ENCODE measurements at regions of chr5 and their contacts with region 1.

Region 1: DNA sequence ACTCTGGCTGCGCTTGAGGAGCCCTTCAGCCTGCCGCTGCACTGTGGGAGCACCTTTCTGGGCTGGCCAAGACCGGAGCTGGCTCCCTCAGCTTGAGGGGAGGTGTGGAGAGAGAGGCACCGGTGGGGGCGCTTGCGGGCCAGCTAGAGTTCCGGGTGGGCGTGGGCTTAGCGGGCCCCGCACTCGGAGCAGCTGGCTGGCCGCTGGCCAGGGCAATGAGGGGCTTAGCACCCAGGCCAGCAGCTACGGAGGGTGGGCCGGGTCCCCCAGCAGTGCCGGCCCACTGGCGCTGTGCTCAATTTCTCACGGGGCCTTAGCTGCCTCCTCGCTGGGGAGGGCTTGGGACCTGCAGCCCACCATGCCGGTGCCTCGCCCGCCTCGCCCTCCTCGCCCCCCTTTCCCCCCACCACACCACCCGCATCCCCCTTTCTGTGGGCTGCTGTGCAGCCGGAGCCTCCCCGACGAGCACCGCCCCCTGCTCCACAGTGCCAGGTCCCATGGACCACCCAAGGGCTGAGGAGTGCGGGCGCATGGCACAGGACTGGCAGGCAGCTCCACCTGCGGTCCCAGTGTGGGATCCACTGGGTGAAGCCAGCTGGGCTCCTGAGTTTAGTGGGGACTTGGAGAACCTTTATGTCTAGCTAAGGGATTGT is 954.5 kb downstream of the DTWD2 start:
- DNase-seq: no peak
- ATAC-seq: no peak
- H3K4me3 ChIP-seq: no peak overlapping the region
- H3K4me3 Mint-ChIP-seq: no peak overlapping the region
- H3K27ac ChIP-seq: no peak overlapping the region
- H3K27ac Mint-ChIP-seq: no peak overlapping the region
- H3K4me1 ChIP-seq: no peaks in the 10 kb centered on the region
- H3K4me1 Mint-ChIP-seq: no peaks in the 10 kb centered on the region
- H3K27me3 ChIP-seq: no peaks in the 10 kb centered on the region
- H3K27me3 Mint-ChIP-seq: no peaks in the 10 kb centered on the region

Region 2: GRCh38 chr5:117731446-117731845 is 302.4 kb before region 1 on chr5:
- CTCF ChIA-PET with region 1: no interaction called
- POLR2A ChIA-PET with region 1: no interaction called
- DNase-seq: no peak
- ATAC-seq: no peak
- H3K4me3 ChIP-seq: no peak overlapping the region
- H3K4me3 Mint-ChIP-seq: no peak overlapping the region
- H3K27ac ChIP-seq: no peak overlapping the region
- H3K27ac Mint-ChIP-seq: no peak overlapping the region
- H3K4me1 ChIP-seq: no peaks in the 10 kb centered on the region
- H3K4me1 Mint-ChIP-seq: no peaks in the 10 kb centered on the region
- H3K27me3 ChIP-seq: no peaks in the 10 kb centered on the region
- H3K27me3 Mint-ChIP-seq: no peaks in the 10 kb centered on the region

Region 3: DNA sequence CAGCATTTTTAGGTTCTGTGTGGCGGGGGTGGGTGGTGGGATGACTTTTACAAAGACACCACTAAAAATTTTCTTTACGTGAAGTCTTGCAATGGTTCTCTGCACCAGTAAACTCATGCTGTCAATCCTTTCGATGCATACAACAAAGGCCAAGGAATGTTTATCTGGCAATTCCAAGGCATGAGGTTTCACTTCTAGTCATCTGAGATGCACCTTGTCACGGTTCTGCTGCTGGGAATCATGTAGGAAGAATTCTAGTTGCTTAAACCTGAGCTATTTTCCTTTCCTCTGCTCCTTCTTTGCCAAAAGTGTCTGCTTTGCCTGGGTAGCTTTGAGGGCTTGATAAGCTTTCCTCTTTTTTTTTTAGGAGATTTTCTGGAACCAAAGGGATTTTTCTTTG is 254.6 kb before region 1 on chr5:
- CTCF ChIA-PET with region 1: no interaction called
- POLR2A ChIA-PET with region 1: interaction called in 1 of 2 experiments, 10 read pairs
- DNase-seq: no peak
- ATAC-seq: no peak
- H3K4me3 ChIP-seq: no peak overlapping the region
- H3K4me3 Mint-ChIP-seq: no peak overlapping the region
- H3K27ac ChIP-seq: no peak overlapping the region
- H3K27ac Mint-ChIP-seq: no peak overlapping the region
- H3K4me1 ChIP-seq: no peaks in the 10 kb centered on the region
- H3K4me1 Mint-ChIP-seq: no peaks in the 10 kb centered on the region
- H3K27me3 ChIP-seq: no peaks in the 10 kb centered on the region
- H3K27me3 Mint-ChIP-seq: no peaks in the 10 kb centered on the region

Region 4: GRCh38 chr5:118139460-118139859 is 105.6 kb after region 1 on chr5:
- CTCF ChIA-PET with region 1: no interaction called
- POLR2A ChIA-PET with region 1: no interaction called
- DNase-seq: no peak
- ATAC-seq: no peak
- H3K4me3 ChIP-seq: no peak overlapping the region
- H3K4me3 Mint-ChIP-seq: no peak overlapping the region
- H3K27ac ChIP-seq: no peak overlapping the region
- H3K27ac Mint-ChIP-seq: no peak overlapping the region
- H3K4me1 ChIP-seq: no peaks in the 10 kb centered on the region
- H3K4me1 Mint-ChIP-seq: no peaks in the 10 kb centered on the region
- H3K27me3 ChIP-seq: no peaks in the 10 kb centered on the region
- H3K27me3 Mint-ChIP-seq: no peaks in the 10 kb centered on the region